ENCODE measurements at regions of chr12 and their contacts with region 1.

Region 1: GRCh38 chr12:56461235-56462159 is 6.9 kb upstream of the SPRYD4 start:
- DNase-seq: no peak
- H3K4me3 ChIP-seq: no peak overlapping the region
- H3K27ac ChIP-seq: no peak overlapping the region
- H3K4me1 ChIP-seq: peaks cover 4 to 9% (median 6%) of the 10 kb centered on the region in 4 experiments; a peak in 6 of 7 replicates
- H3K27me3 ChIP-seq: no peaks in the 10 kb centered on the region
- CTCF ChIP-seq: no peak
- EP300 ChIP-seq: no peak
- POLR2A ChIP-seq: no peak
- RAD21 ChIP-seq: no peak

Region 2: DNA sequence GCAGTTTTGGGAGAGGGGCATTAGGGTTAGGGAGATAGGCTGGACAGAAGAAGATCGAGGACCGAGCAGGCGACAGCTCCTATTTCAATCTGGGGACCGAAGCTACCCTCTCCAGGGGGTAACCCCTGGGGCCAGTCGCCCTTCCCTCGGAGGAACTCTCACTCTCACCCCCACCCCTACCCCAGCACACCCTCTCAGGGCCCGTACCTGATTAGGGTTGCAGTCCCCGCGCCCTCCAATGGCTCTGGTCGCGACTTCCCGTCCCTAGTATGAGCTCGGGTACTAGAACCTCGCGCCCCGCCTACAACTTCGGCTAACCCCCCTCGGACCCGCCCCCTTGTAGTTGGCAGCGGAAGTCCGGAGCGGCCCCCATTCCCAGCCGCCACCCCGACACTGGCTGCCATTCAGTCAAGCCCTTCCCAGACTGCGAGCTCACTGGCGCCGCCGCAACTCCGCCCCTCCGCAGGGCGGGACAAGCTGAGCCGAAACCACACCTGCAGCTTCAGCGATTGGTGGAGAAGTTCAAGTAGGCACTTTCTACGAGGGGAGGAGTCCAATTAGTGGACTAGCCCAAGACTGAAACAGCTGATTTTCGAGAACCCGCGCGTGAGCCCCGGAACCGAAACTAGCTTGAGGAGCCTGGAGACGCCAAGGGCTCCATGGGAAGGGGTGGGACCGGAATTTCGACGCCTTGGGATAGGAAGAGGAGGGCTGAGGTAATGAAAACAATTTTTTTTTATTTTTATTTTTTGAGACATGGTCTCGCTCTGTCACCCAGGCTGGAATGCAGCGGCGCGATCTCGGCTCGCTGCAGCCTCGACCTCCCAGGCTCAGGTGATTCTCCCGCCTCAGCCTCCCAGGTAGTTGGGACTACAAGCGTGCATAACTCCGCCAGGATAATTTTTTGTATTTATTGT is 101.4 kb before region 1 on chr12 and contains the start of gene STAT2:
- CTCF ChIA-PET with region 1: interaction called, 24 read pairs
- POLR2A ChIA-PET with region 1: interaction called, 3 read pairs
- DNase-seq: peak; percentile 98 to 99
- H3K4me3 ChIP-seq: peak within 1 kb of the TSS; percentile 78 to 88 (median 84)
- H3K27ac ChIP-seq: peak within 1 kb of the TSS; percentile 70
- H3K4me1 ChIP-seq: peaks cover 0 to 5% (median 2%) of the 10 kb centered on the region in 4 experiments; a peak in 4 of 7 replicates
- H3K27me3 ChIP-seq: peaks cover 0 to 3% (median 0%) of the 10 kb centered on the region in 4 experiments; a peak in 1 of 7 replicates
- CTCF ChIP-seq: no peak
- EP300 ChIP-seq: peak; percentile 65 to 71; a peak in 2 of 3 replicates
- POLR2A ChIP-seq: peak in 1 of 2 experiments; percentile 56; a peak in 2 of 3 replicates
- RAD21 ChIP-seq: no peak
- total RNA-seq, gene STAT2: 42.4 and 44.7 TPM in 2 replicates

Region 3: DNA sequence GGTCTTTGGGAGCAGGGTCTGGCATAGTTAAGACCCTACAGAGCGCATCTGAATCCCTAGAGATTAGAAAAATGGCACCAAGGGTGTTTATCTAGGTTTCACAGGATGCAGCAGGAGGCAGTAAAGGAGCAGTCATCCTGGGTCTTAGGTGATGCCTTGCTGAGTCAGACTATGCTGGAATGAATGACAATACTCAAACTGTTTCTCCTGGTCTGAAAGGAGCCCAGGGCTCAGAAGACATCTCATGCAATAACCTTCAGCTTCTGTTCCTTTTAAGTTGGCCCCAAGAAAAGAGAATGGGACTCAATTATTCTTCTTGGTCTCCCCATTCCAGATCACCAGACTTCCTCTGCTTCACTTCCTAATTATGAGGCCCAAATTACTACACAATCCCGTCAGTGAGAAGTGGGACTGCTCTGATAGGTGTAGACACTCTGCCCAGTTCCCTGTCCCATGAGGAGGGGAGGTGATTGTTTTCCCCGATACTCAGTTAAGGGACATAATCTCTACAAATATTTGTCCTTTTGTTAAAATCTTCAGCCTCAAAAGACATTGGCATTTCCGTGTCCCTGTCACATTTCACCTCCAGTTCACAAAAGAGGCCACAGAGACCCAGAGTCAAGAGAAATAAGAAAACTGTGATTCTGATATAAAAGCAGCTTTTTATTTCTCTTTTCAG is 84.0 kb before region 1 on chr12:
- CTCF ChIA-PET with region 1: interaction called, 25 read pairs
- POLR2A ChIA-PET with region 1: interaction called, 6 read pairs
- DNase-seq: no peak
- H3K4me3 ChIP-seq: no peak overlapping the region
- H3K27ac ChIP-seq: no peak overlapping the region
- H3K4me1 ChIP-seq: peaks cover 0 to 5% (median 0%) of the 10 kb centered on the region in 4 experiments; a peak in 3 of 7 replicates
- H3K27me3 ChIP-seq: no peaks in the 10 kb centered on the region
- CTCF ChIP-seq: peak in 2 of 3 experiments; percentile 43 to 47; a peak in 3 of 4 replicates
- EP300 ChIP-seq: no peak
- POLR2A ChIP-seq: no peak
- RAD21 ChIP-seq: peak; percentile 67 to 73

Region 4: DNA sequence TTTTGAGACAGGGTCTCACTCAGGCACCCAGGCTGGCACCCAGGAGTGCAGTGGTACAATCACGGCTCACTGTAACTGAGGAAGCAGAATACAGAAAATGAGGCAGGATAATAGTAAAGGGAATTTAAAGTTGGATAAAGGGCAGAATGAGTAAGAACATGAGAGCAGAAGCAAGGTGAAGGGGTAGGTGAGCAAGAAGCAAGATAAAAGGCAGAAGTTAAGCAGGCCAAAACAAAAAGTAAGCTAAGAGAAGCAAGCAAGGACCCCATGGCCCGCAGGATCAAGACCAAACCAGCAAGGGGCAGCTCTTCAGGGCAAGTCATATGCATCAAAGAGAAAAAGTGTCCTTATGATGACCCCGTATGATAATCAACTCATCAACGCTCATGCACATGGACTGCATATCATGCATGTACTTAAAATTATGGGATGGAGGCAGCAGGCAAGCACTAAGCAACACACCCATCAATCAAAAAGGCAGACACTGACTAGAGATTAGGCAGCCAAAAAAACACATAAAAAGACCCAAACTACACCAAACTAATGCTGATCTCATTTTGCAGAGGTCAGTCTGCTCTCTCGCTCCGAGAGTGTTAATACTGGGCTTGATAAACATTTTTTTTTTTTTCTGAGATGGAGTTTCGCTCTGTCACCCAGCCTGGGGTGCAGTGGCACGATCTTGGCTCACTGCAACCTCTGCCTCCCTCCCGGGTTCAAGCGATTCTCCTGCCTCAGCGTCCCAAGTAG is 23.9 kb before region 1 on chr12:
- CTCF ChIA-PET with region 1: interaction called, 41 read pairs
- POLR2A ChIA-PET with region 1: interaction called, 6 read pairs
- DNase-seq: no peak
- H3K4me3 ChIP-seq: no peak overlapping the region
- H3K27ac ChIP-seq: no peak overlapping the region
- H3K4me1 ChIP-seq: no peaks in the 10 kb centered on the region; a peak in 1 of 7 replicates
- H3K27me3 ChIP-seq: no peaks in the 10 kb centered on the region
- CTCF ChIP-seq: no peak
- EP300 ChIP-seq: no peak
- POLR2A ChIP-seq: no peak
- RAD21 ChIP-seq: no peak

Region 5: DNA sequence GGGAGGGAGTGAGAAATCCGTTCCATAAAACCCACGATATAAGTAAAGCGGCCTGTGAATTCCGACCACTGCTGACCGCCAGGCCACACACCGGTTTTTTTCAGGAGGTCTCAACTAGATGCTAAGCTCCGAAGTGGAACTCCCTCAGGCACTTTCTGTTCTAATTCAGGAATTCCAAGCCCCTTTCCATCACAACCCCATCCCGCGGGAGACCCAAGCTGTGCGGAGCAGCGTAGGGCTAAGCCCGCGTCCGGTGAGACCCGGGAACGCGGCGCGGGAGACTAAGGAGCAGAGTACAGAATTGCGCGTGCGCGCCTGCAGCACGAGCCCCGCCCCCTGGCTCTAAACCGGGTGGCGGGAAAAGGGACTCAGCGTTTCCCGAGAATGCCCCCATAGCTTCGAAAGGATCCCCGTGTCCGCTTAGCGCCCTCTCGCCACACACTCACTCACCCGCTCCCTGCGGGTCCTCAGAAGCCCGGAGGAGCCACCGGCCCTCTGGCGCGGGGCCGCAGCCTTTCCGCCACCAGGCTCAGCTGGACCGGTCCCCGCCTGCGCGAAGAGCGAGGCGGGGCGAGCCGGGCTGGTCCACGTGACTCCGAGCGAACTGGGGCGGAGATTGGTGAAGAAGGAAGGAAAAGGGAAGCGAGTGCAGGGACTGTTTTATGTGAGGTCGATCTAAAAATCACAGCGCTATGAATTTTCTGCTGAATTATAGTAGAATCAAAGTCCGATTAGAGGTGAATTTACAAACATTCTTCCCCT is 12.5 kb before region 1 on chr12 and contains the start of gene TIMELESS:
- CTCF ChIA-PET with region 1: interaction called, 124 read pairs
- POLR2A ChIA-PET with region 1: interaction called, 74 read pairs
- DNase-seq: peak; percentile 67 to 95
- H3K4me3 ChIP-seq: peak within 1 kb of the TSS; percentile 52 to 90 (median 70)
- H3K27ac ChIP-seq: peak within 1 kb of the TSS; percentile 93
- H3K4me1 ChIP-seq: peaks cover 3 to 6% (median 5%) of the 10 kb centered on the region in 4 experiments; a peak in 5 of 7 replicates
- H3K27me3 ChIP-seq: no peaks in the 10 kb centered on the region
- CTCF ChIP-seq: no peak
- EP300 ChIP-seq: 0 out of 3 replicates have a peak, but pooled peaks of 1 of the 2 experiments have one; percentile 7
- POLR2A ChIP-seq: peak; percentile 94 to 95
- RAD21 ChIP-seq: peak in 1 of 2 experiments; percentile 0; a peak in 1 of 4 replicates
- total RNA-seq, gene TIMELESS: 86.7 and 88.7 TPM in 2 replicates

Region 6: GRCh38 chr12:56551070-56551469 is 89.6 kb after region 1 on chr12:
- CTCF ChIA-PET with region 1: no interaction called
- POLR2A ChIA-PET with region 1: no interaction called
- DNase-seq: no peak
- H3K4me3 ChIP-seq: no peak overlapping the region
- H3K27ac ChIP-seq: no peak overlapping the region
- H3K4me1 ChIP-seq: no peaks in the 10 kb centered on the region
- H3K27me3 ChIP-seq: no peaks in the 10 kb centered on the region
- CTCF ChIP-seq: no peak
- EP300 ChIP-seq: no peak
- POLR2A ChIP-seq: no peak
- RAD21 ChIP-seq: no peak

Region 7: DNA sequence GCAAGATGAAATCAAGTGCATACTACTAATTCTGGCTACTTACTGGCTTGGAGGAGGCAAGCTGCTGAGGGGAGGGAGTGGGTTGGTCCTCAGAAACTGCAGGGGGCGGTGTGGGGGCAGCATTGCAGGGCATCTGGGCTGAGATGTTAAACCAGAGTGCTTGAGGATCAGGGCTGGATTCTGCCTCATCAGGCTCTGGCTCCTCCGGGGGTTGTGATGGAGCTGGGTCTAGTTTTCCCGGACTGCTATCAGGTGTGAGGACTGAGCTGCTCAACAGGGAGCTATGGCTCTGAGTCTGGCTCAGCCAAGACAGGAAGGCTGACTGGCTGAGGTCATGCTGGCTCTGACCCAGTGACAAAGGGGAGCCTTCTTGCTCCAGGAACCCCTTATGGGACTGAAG is 140.0 kb after region 1 on chr12:
- CTCF ChIA-PET with region 1: no interaction called
- POLR2A ChIA-PET with region 1: no interaction called
- DNase-seq: no peak
- H3K4me3 ChIP-seq: no peak overlapping the region
- H3K27ac ChIP-seq: no peak overlapping the region
- H3K4me1 ChIP-seq: peaks cover 0 to 6% (median 2%) of the 10 kb centered on the region in 4 experiments; a peak in 2 of 7 replicates
- H3K27me3 ChIP-seq: no peaks in the 10 kb centered on the region
- CTCF ChIP-seq: peak; percentile 10 to 49 (median 34); a peak in 2 of 4 replicates
- EP300 ChIP-seq: no peak
- POLR2A ChIP-seq: no peak
- RAD21 ChIP-seq: peak; percentile 13; a peak in 2 of 4 replicates

Region 8: GRCh38 chr12:56635806-56636674 is 174.5 kb after region 1 on chr12:
- CTCF ChIA-PET with region 1: no interaction called
- POLR2A ChIA-PET with region 1: no interaction called
- DNase-seq: peak in 1 of 2 experiments; percentile 76
- H3K4me3 ChIP-seq: peak overlapping the region; percentile 86 to 90 (median 88); a peak in 7 of 8 replicates
- H3K27ac ChIP-seq: peak overlapping the region; percentile 74; the same call in 1 of the 2 replicates
- H3K4me1 ChIP-seq: peaks cover 11 to 37% (median 27%) of the 10 kb centered on the region in 4 experiments
- H3K27me3 ChIP-seq: no peaks in the 10 kb centered on the region
- CTCF ChIP-seq: no peak
- EP300 ChIP-seq: no peak
- POLR2A ChIP-seq: no peak; a peak in 1 of 3 replicates
- RAD21 ChIP-seq: no peak; a peak in 1 of 4 replicates